WTC11 (cell line): ENCODE measurements at regions of chr5 and their contacts with region 1.

Region 1: GRCh38 chr5:38441453-38442246 is 114.8 kb downstream of the LIFR start:
- DNase-seq: peak; percentile 92
- ATAC-seq: peak; percentile 98
- H3K4me3 Mint-ChIP-seq: no peak overlapping the region
- H3K27ac Mint-ChIP-seq: no peak overlapping the region
- H3K4me1 Mint-ChIP-seq: peaks cover 4% of the 10 kb centered on the region
- H3K27me3 Mint-ChIP-seq: no peaks in the 10 kb centered on the region
- CTCF ChIP-seq: peak; percentile 86

Region 2: DNA sequence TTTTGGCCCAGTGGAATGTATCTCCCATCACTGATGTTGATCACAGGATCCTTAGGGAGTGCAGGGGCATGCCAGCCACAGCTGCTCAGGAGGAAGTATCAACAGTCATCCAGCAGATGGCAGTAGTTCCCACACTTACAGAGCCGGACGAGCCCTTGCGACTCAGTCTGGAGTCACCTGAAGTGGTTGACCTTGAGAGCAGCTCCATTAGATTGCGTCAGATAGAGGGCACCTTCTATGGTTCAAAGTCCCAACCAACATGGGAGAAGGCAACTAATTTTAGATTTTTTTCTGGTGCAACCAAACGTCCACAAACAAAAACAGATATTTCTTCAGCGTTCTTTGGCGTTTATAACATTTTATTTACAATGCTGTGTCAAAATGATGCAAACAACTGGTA is 58.8 kb before region 1 on chr5:
- CTCF ChIA-PET with region 1: interaction called, 22 read pairs
- POLR2A ChIA-PET with region 1: no interaction called
- DNase-seq: peak; percentile 81
- ATAC-seq: peak; percentile 93
- H3K4me3 Mint-ChIP-seq: no peak overlapping the region
- H3K27ac Mint-ChIP-seq: no peak overlapping the region
- H3K4me1 Mint-ChIP-seq: peaks cover 50% of the 10 kb centered on the region
- H3K27me3 Mint-ChIP-seq: no peaks in the 10 kb centered on the region
- CTCF ChIP-seq: peak; percentile 65

Region 3: GRCh38 chr5:38473008-38473407 is 31.4 kb after region 1 on chr5:
- CTCF ChIA-PET with region 1: interaction called, 31 read pairs
- POLR2A ChIA-PET with region 1: no interaction called
- DNase-seq: no peak
- ATAC-seq: peak; percentile 78
- H3K4me3 Mint-ChIP-seq: no peak overlapping the region
- H3K27ac Mint-ChIP-seq: peak overlapping the region; percentile 32; the same call in 1 of the 2 replicates
- H3K4me1 Mint-ChIP-seq: peaks cover 20% of the 10 kb centered on the region
- H3K27me3 Mint-ChIP-seq: no peaks in the 10 kb centered on the region
- CTCF ChIP-seq: no peak

Region 4: GRCh38 chr5:38540314-38540713 is 98.7 kb after region 1 on chr5:
- CTCF ChIA-PET with region 1: interaction called, 13 read pairs
- POLR2A ChIA-PET with region 1: no interaction called
- DNase-seq: no peak
- ATAC-seq: no peak; the same call in 1 of the 2 replicates
- H3K4me3 Mint-ChIP-seq: no peak overlapping the region
- H3K27ac Mint-ChIP-seq: no peak overlapping the region
- H3K4me1 Mint-ChIP-seq: peaks cover 32% of the 10 kb centered on the region
- H3K27me3 Mint-ChIP-seq: no peaks in the 10 kb centered on the region
- CTCF ChIP-seq: no peak

Region 5: GRCh38 chr5:38666668-38667498 is 225.2 kb after region 1 on chr5:
- CTCF ChIA-PET with region 1: interaction called, 26 read pairs
- POLR2A ChIA-PET with region 1: no interaction called
- DNase-seq: peak; percentile 52
- ATAC-seq: peak; percentile 97
- H3K4me3 Mint-ChIP-seq: no peak overlapping the region
- H3K27ac Mint-ChIP-seq: no peak overlapping the region
- H3K4me1 Mint-ChIP-seq: 0 out of 2 replicates have a peak, but pooled peaks cover under 1% of the 10 kb centered on the region
- H3K27me3 Mint-ChIP-seq: no peaks in the 10 kb centered on the region
- CTCF ChIP-seq: no peak

Region 6: DNA sequence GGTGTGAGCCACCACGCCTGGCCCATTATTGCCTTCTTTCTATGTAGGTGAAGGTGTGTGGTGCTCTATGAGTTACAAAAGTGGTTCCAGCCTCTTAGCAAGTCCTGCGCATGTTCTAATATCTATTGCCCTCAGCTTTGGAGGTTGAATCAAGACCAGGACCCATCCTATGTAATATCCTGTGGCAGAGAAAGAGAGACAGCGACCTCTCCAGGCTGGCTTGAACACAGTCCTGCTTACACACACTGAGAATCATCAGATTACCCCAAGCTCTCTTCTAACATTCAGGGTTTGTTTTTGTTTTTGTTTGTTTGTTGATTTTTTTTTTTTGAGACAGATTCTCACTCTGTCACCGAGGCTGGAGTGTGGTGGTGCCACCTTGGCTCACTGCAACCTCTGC is 309.5 kb after region 1 on chr5:
- CTCF ChIA-PET with region 1: interaction called, 44 read pairs
- POLR2A ChIA-PET with region 1: no interaction called
- DNase-seq: peak; percentile 39
- ATAC-seq: peak; percentile 88
- H3K4me3 Mint-ChIP-seq: no peak overlapping the region
- H3K27ac Mint-ChIP-seq: no peak overlapping the region
- H3K4me1 Mint-ChIP-seq: no peaks in the 10 kb centered on the region; the same call in 1 of the 2 replicates
- H3K27me3 Mint-ChIP-seq: no peaks in the 10 kb centered on the region; the same call in 1 of the 2 replicates
- CTCF ChIP-seq: no peak